Cardiac septum (tissue), 1 donor: ENCODE measurements at regions of chr19 and their contacts with region 1.

Region 1: DNA sequence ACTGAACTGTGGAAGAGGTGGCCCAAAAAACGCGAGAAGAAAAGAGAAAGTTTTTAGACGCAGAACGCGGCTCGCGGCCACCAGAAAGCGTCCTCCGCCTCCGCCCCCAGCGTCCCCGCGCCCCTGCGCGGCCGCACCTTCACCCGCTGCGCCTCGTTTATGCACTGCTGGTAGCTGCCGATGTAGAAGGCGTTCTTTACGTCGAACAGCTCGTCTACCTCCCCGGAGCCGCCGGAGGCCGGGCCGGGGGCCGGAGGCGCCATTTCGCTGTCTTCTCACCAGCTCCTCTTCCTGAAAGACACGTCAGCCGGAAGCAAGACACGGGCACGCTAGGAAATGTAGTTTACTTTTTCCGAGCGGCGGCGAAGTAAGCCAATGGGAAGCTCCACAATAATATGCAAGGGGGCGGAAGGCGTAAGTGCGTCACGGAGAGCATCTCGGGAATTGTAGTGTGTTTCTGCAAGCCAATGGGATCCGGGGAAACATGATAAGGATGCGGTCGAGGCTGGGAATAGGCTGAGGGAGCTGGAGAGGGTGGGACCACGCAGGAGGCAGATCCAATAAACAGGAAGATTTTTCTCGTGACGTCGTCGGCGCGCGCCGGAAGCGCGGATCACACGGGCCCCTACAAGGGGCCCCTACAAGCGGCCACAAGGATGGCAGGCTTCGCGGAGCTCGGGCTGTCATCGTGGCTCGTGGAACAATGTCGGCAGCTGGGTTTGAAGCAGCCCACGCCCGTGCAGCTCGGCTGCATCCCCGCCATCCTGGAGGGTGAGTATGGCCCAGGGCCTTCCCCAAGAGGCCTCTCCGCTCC is at the starts of genes COPE and DDX49:
- DNase-seq: peak; percentile 98
- total RNA-seq, gene COPE: 133 TPM
- total RNA-seq, gene DDX49: 22.9 TPM

Region 2: DNA sequence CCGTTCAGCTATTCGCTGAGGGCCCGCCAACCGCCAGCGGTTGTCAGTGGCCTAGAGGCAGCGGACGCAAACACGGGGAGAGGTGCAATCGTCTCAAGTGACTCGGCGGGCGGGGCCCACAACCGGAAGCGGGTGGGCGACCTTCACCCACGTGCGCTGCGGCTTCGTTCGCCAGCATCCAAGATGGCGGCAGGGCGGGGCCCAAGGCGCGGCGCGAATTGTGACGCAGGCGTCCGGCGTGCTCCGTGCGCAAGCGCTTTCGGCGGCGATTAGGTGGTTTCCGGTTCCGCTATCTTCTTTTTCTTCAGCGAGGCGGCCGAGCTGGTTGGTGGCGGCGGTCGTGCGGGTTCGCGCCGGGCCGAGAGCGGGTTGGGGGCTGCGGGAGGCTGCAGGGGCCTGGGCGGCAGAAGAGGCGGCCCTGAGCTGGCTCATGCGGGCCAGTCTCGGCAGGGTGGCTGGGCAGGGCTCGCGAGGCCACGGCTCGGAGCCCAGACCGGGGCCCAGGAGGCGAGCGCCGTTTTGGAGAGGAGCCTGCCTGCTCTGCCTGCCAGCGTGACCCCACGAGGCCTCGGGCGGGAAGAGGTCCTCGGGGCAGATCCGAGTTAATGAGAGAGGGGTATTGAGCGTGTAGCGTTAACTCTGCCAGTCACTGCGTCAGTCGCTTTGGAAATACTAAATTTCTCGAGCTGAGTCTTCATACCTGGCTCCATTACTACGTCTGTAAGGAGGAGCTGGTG is 347.6 kb before region 1 on chr19 and contains the start of gene UBA52:
- intact Hi-C with region 1: loop called (anchors 5 kb)
- DNase-seq: peak; percentile 98
- total RNA-seq, gene UBA52: 573 TPM

Region 3: GRCh38 chr19:18995804-18996241 is 76.5 kb after region 1 on chr19:
- intact Hi-C with region 1: no loop called
- DNase-seq: no peak

Region 4: DNA sequence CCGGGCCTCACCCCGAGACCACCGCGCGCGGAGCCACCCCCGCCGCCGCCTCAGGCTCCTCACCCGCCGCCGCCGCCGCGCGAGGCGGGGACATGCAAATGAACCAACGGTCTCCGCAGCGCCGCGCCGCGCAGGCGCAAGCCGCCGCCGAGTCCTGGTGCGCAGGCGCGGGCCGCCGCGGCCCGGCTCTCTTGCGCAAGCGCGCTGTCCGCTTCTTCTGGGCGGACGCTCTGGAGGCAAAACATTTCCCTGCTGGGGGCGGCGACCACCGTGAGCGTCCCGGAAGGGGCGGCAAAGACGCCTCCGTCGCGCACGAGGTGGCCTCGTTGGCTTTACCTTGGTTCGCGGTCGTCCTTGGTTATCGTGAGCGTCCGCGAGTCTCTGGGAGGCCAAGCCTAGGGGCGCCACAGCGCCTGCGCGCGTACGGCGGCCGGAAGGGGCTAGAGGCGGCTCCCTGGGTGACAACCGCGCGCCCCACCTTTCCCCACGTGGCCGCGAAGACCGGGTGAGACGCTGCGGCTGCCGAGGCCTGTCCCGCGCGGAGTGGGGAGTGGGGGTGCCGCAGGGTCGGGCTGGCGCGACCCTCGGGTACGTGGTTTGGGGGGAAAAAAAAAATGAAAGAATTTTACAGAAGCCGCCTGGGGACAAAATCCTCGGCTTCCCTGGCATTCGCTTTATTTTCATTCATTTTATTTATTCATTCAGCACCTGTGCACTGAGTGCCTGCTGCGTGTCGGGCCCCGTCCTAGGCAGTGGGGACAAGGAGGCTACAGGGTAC is 114.3 kb after region 1 on chr19 and contains the starts of genes ARMC6 and SUGP2:
- intact Hi-C with region 1: loop called (anchors 5 kb)
- DNase-seq: peak; percentile 94
- total RNA-seq, gene ARMC6: 15.9 TPM
- total RNA-seq, gene SUGP2: 60.4 TPM